Tibial artery (tissue), 4 donors: ENCODE measurements at regions of chr12 and their contacts with region 1.

Region 1: DNA sequence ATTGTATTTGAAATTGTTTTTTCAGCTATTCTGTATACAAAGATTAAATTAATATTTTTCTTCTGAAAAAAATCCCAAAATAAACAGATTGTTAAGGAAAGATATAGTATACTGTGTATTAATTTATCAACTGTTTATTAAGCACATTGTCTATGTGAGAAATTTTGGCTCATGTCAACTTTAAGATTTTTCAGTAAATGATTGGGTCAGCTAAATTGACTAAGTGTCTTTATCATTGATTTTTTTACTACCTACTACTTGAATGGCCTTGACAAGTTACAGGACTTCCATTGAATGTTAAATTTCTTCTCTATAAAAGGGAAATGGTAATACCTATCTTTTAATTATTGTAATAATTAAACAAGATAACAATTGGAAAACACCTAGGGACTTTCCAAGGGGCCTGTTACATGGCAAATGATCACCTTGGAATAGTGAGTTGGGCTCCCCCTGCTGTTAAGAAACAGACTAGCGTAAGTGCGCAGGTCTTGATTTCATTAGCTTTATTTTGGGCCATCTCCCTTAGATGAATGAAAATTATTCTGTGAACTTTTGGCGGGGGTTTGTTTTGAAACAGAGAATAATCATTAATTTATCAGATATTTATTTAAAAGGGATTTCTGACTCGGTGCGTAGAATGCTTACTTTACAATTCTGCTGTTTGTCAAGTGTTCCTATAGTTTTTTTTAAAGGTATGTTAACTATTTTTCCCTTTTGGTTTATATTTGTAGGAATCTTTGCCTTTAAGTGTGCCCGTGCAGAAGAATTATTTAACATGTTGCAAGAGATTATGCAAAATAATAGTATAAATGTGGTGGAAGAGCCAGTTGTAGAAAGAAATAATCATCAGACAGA is 14.5 kb upstream of the CCT2 start:
- DNase-seq: peak in 1 of 2 donors; percentile 62
- H3K4me3 ChIP-seq: no peak overlapping the region
- H3K27ac ChIP-seq: no peak overlapping the region
- H3K4me1 ChIP-seq: no peaks in the 10 kb centered on the region
- H3K27me3 ChIP-seq: no peaks in the 10 kb centered on the region
- CTCF ChIP-seq: peak; percentile 77 to 78

Region 2: DNA sequence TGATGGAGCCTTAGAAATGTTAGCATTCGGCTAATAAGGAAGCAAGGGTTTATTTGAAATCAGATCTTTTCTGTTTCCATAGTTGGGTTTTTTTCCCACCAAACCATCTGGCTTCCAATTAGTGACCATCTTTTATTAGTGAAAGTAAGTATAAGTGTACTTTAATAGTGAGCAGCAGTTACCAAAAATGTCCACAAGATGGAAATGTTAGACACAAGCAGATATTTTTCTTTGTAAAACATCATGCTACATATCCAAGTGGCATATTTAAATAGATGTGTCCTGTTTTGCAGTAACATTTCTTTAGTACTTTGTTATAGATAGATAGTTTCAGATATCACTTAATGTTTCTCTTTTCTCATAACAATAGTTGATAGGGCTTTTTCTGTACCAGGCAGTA is 182.4 kb before region 1 on chr12:
- intact Hi-C with region 1: loop called (anchors 2 kb)
- DNase-seq: no peak
- H3K4me3 ChIP-seq: no peak overlapping the region
- H3K27ac ChIP-seq: peak overlapping the region in 1 of 2 donors; percentile 22
- H3K4me1 ChIP-seq: peaks cover 0 to 23% (median 0%) of the 10 kb centered on the region in 4 donors
- H3K27me3 ChIP-seq: no peaks in the 10 kb centered on the region
- CTCF ChIP-seq: peak; percentile 72 to 82

Region 3: DNA sequence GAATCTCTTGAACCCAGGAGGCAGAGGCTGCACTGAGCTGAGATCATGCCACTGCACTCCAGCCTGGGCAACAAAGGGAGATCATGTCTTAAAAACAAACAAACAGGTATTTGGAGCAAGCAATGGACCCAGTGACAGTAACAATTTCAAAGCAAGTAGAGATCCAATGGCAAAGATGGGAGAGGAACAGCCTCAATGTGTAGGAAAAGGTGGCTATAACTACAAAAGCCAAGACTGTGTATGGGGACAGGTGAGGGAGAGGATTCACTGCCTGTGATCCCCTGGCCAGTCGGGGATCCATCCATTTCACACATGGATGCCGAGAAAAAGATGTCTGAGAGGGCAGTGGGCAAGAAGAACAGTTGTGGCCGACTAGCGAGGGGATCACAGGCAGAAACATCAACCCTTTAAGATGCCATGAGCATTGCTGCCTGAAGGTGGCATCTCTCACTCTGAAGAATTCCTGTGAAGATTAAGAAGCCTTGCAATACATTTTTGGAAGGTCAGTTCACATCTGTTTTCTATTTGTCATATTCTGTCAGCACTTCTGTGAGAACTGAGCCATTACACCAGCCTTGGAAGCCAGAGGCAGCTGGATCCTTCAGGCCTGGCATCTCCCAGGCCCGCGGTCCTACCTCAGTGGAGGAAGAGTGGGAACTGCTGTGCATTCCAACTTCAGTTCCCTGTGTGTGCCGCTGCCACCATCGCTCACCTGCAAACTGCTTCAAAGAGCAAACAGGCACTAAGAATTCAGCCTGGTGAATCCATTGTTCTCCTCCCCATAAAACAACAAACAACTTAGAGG is 155.1 kb before region 1 on chr12:
- intact Hi-C with region 1: loop called (anchors 10 kb)
- DNase-seq: peak; percentile 65 to 73
- H3K4me3 ChIP-seq: no peak overlapping the region
- H3K27ac ChIP-seq: peak overlapping the region; percentile 33 to 34
- H3K4me1 ChIP-seq: peaks cover 0 to 11% (median 8%) of the 10 kb centered on the region in 4 donors
- H3K27me3 ChIP-seq: no peaks in the 10 kb centered on the region
- CTCF ChIP-seq: peak; percentile 76 to 86

Region 4: GRCh38 chr12:69470189-69471075 is 100.3 kb before region 1 on chr12 and contains the start of gene FRS2:
- intact Hi-C with region 1: loop called (anchors 5 kb)
- DNase-seq: peak; percentile 88 to 95
- H3K4me3 ChIP-seq: peak within 1 kb of the TSS; percentile 77 to 99
- H3K27ac ChIP-seq: peak within 1 kb of the TSS; percentile 94 to 99
- H3K4me1 ChIP-seq: peaks cover 0 to 45% (median 36%) of the 10 kb centered on the region in 4 donors
- H3K27me3 ChIP-seq: no peaks in the 10 kb centered on the region
- CTCF ChIP-seq: peak in 1 of 2 experiments; percentile 9

Region 5: DNA sequence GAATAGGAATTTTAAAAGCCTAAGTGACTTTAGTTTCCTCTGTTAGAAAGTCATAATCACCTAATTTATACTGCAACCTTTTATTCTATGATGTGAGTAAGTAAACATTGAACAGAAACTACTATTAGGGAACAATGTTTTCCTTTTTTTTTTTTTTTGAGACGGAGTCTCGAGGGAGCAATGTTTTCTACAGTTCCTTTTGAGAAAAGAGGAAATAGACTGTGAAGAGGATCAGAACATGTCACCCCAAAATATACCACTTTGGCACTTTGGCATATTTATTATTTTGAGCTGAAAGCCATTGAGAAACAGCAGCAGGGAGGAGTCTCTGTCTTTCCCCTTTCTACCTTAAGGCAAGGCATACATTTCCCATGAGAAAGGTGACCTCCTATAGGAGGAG is 509.8 kb after region 1 on chr12:
- intact Hi-C with region 1: no loop called
- DNase-seq: no peak
- H3K4me3 ChIP-seq: no peak overlapping the region
- H3K27ac ChIP-seq: no peak overlapping the region
- H3K4me1 ChIP-seq: no peaks in the 10 kb centered on the region
- H3K27me3 ChIP-seq: no peaks in the 10 kb centered on the region
- CTCF ChIP-seq: no peak